CD4-positive, alpha-beta memory T cell (primary cell): ENCODE measurements at regions of chr20 and their contacts with region 1.

Region 1: DNA sequence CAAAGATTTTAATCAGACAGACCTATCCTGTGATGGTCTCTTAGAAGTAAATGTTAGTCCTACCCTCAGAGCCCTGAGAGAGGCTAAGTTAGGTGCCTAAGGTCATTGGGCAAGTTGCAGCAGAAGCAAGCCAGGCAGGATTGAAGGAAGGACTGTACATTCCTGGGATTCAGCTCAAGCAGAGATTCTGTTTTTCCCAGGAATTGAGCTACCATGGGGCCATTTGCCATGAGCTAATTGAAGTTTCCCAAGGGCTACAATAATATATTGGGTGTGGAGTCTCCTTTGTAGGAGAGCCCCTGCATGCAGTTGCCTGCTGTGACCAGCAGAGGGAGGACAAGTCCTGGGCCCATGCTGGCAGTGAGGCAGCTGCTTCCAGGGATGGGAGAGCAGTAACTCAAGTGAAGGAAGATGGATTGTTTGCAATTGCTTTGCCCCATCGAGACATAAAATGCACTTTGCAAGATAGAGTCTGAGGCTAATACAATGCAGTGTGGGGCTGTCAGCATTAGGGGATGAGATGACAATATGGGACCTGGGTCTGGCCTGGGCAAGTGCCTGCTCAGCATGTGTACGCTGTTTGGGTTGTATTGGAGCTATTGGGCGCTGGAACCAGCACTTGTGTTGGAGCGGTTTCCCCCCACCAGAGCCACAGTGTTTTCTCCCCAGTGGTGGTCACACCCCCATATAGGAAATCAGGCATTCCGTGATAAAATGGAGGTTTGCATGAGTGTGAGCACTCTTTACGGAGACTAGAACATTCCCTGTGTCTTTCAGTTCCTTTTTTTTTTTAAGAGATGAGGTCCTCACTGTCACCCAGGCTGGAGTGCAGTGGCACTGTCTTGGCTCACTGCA is 27.9 kb downstream of the DNMT3B start:
- DNase-seq: peak; percentile 66 to 73 (median 67)
- H3K4me3 ChIP-seq: no peak overlapping the region
- H3K4me3 Mint-ChIP-seq: peak overlapping the region in 1 of 8 donors; percentile 9
- H3K27ac ChIP-seq: no peak overlapping the region
- H3K27ac Mint-ChIP-seq: peak overlapping the region in 6 of 7 donors; percentile 16 to 88 (median 70)
- H3K4me1 ChIP-seq: peaks cover 41% of the 10 kb centered on the region
- H3K4me1 Mint-ChIP-seq: peaks cover 23 to 44% (median 31%) of the 10 kb centered on the region in 4 donors
- H3K27me3 ChIP-seq: no peaks in the 10 kb centered on the region
- H3K27me3 Mint-ChIP-seq: no peaks in the 10 kb centered on the region

Region 2: DNA sequence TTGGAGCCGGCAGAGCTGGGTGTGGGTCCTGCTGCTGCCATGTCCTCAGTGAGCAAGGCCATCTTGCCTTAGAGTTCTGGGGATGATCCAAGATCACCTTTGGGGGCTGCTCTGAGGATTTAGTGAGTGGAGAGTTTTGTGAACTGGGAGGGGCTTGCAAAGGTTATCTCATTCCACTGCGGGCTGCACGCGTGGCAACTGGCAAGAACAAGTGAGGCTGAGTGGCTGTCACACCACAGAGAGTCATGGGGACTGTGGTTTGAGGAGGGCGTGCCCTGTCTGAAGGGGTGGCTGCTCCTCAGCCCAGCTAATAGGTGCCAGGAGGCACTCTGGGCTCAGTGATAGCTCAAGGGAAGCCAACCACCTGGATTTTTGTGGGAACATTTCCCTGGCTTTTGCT is 882.1 kb before region 1 on chr20:
- CTCF ChIA-PET with region 1: no interaction called
- POLR2A ChIA-PET with region 1: no interaction called
- intact Hi-C with region 1: no loop called
- DNase-seq: no peak
- H3K4me3 ChIP-seq: no peak overlapping the region
- H3K4me3 Mint-ChIP-seq: no peak overlapping the region
- H3K27ac ChIP-seq: no peak overlapping the region
- H3K27ac Mint-ChIP-seq: no peak overlapping the region
- H3K4me1 ChIP-seq: no peaks in the 10 kb centered on the region
- H3K4me1 Mint-ChIP-seq: no peaks in the 10 kb centered on the region
- H3K27me3 ChIP-seq: no peaks in the 10 kb centered on the region
- H3K27me3 Mint-ChIP-seq: peaks cover 2 to 3% of the 10 kb centered on the region in 2 donors

Region 3: DNA sequence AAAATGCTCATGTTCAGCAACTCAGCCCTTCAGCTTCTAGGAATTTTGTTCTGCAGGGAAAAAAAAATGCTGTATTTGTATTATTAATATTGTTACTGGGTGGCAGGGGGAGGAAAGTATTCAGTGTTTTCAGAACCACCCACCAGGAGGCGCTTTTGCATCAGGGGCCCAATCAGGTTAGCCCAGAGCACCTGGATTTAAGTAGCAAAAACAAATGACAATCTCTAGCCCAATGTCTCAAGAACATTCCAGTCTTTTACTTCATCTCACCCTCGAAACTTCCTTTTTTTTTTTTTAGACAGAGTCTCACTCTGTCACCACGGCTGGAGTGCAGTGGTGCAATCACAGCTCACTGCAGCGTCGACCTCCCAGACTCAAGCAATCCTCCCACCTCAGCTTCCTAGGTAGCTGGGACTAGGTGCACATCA is 115.7 kb before region 1 on chr20:
- CTCF ChIA-PET with region 1: interaction called, 21 read pairs
- POLR2A ChIA-PET with region 1: no interaction called
- intact Hi-C with region 1: no loop called
- DNase-seq: peak; percentile 65 to 67 (median 65)
- H3K4me3 ChIP-seq: no peak overlapping the region
- H3K4me3 Mint-ChIP-seq: no peak overlapping the region
- H3K27ac ChIP-seq: no peak overlapping the region
- H3K27ac Mint-ChIP-seq: peak overlapping the region in 1 of 7 donors; percentile 3
- H3K4me1 ChIP-seq: peaks cover 12% of the 10 kb centered on the region
- H3K4me1 Mint-ChIP-seq: peaks cover 3 to 20% (median 9%) of the 10 kb centered on the region in 4 donors
- H3K27me3 ChIP-seq: no peaks in the 10 kb centered on the region
- H3K27me3 Mint-ChIP-seq: no peaks in the 10 kb centered on the region

Region 4: GRCh38 chr20:32819992-32820710 is 30.0 kb after region 1 on chr20:
- CTCF ChIA-PET with region 1: interaction called, 8 read pairs
- POLR2A ChIA-PET with region 1: interaction called, 16 read pairs
- intact Hi-C with region 1: loop called (anchors 1 kb)
- DNase-seq: peak; percentile 85 to 93 (median 91)
- H3K4me3 ChIP-seq: peak overlapping the region; percentile 83 to 94
- H3K4me3 Mint-ChIP-seq: peak overlapping the region; percentile 96 to 99 (median 98)
- H3K27ac ChIP-seq: peak overlapping the region; percentile 90
- H3K27ac Mint-ChIP-seq: peak overlapping the region; percentile 98 to 100 (median 99)
- H3K4me1 ChIP-seq: peaks cover 49% of the 10 kb centered on the region
- H3K4me1 Mint-ChIP-seq: peaks cover 34 to 48% (median 40%) of the 10 kb centered on the region in 4 donors
- H3K27me3 ChIP-seq: no peaks in the 10 kb centered on the region
- H3K27me3 Mint-ChIP-seq: no peaks in the 10 kb centered on the region

Region 5: GRCh38 chr20:32830437-32830836 is 40.3 kb after region 1 on chr20:
- CTCF ChIA-PET with region 1: interaction called, 12 read pairs
- POLR2A ChIA-PET with region 1: no interaction called
- intact Hi-C with region 1: loop called (anchors 2 kb)
- DNase-seq: no peak
- H3K4me3 ChIP-seq: no peak overlapping the region
- H3K4me3 Mint-ChIP-seq: peak overlapping the region in 1 of 8 donors; percentile 59
- H3K27ac ChIP-seq: no peak overlapping the region
- H3K27ac Mint-ChIP-seq: peak overlapping the region in 3 of 7 donors; percentile 2 to 82 (median 57)
- H3K4me1 ChIP-seq: peaks cover 53% of the 10 kb centered on the region
- H3K4me1 Mint-ChIP-seq: peaks cover 36 to 70% (median 53%) of the 10 kb centered on the region in 4 donors
- H3K27me3 ChIP-seq: no peaks in the 10 kb centered on the region
- H3K27me3 Mint-ChIP-seq: no peaks in the 10 kb centered on the region

Region 6: DNA sequence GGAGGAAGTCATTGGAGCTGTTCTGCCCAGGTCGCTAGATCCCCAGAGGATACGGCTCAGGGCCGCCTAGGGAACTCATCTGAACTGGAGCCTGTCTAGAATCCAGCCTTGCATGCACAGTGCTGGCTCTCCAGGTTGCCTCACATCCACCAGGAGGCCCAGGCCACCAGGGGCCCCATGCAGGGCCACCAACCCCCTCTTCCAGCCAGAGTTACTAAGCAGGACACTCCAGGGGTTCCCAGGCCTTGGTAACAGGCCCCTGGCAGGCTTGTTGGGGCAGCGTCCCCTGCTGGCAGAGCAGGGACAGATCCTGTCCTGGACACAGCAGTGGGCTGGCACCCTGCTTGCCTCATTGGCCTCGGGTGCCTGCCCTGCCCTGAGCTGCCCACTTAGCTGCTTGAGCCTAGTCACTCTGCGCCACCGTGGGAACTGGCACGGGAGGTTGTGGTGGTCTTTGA is 103.9 kb after region 1 on chr20:
- CTCF ChIA-PET with region 1: interaction called, 3 read pairs
- POLR2A ChIA-PET with region 1: no interaction called
- intact Hi-C with region 1: loop called (anchors 1 kb)
- DNase-seq: no peak
- H3K4me3 ChIP-seq: no peak overlapping the region
- H3K4me3 Mint-ChIP-seq: no peak overlapping the region
- H3K27ac ChIP-seq: no peak overlapping the region
- H3K27ac Mint-ChIP-seq: no peak overlapping the region
- H3K4me1 ChIP-seq: no peaks in the 10 kb centered on the region
- H3K4me1 Mint-ChIP-seq: no peaks in the 10 kb centered on the region
- H3K27me3 ChIP-seq: no peaks in the 10 kb centered on the region
- H3K27me3 Mint-ChIP-seq: no peaks in the 10 kb centered on the region

Region 7: GRCh38 chr20:32945710-32946221 is 155.6 kb after region 1 on chr20:
- CTCF ChIA-PET with region 1: interaction called, 25 read pairs
- POLR2A ChIA-PET with region 1: no interaction called
- intact Hi-C with region 1: loop called (anchors 1 kb)
- DNase-seq: peak in 4 of 5 donors; percentile 42 to 54 (median 50)
- H3K4me3 ChIP-seq: peak overlapping the region in 1 of 2 donors; percentile 9
- H3K4me3 Mint-ChIP-seq: peak overlapping the region; percentile 51 to 73 (median 66)
- H3K27ac ChIP-seq: no peak overlapping the region
- H3K27ac Mint-ChIP-seq: peak overlapping the region; percentile 54 to 93 (median 84)
- H3K4me1 ChIP-seq: peaks cover 36% of the 10 kb centered on the region
- H3K4me1 Mint-ChIP-seq: peaks cover 30 to 40% (median 36%) of the 10 kb centered on the region in 4 donors
- H3K27me3 ChIP-seq: no peaks in the 10 kb centered on the region
- H3K27me3 Mint-ChIP-seq: no peaks in the 10 kb centered on the region

Region 8: GRCh38 chr20:33031531-33031930 is 241.4 kb after region 1 on chr20 and contains the start of gene BPIFB6:
- CTCF ChIA-PET with region 1: no interaction called
- POLR2A ChIA-PET with region 1: no interaction called
- intact Hi-C with region 1: no loop called
- DNase-seq: no peak
- H3K4me3 ChIP-seq: no peak within 1 kb of the TSS
- H3K4me3 Mint-ChIP-seq: no peak within 1 kb of the TSS
- H3K27ac ChIP-seq: no peak within 1 kb of the TSS
- H3K27ac Mint-ChIP-seq: no peak within 1 kb of the TSS
- H3K4me1 ChIP-seq: no peaks in the 10 kb centered on the region
- H3K4me1 Mint-ChIP-seq: no peaks in the 10 kb centered on the region
- H3K27me3 ChIP-seq: no peaks in the 10 kb centered on the region
- H3K27me3 Mint-ChIP-seq: no peaks in the 10 kb centered on the region
- total RNA-seq, gene BPIFB6: not detected

Region 9: DNA sequence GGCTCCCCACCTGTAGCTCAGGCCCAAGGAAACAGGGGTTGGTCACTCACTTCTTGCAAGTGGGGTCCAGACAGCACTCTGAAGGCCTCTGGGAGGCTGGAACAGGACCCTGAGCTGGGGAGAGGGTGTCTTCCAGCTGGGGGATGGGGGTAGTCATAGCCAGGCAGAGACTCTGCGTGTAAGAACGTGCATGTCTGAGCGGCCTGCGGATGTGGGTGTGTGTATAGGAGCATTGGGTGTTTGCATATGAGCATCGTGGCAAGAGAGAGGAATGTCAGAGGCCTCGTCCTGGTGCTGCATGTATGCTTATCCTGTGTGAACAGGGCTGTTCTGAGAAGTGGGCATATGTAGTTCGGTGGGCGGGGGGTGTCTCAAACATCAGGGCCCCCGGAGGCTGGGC is 275.7 kb after region 1 on chr20:
- CTCF ChIA-PET with region 1: no interaction called
- POLR2A ChIA-PET with region 1: no interaction called
- intact Hi-C with region 1: no loop called
- DNase-seq: no peak
- H3K4me3 ChIP-seq: no peak overlapping the region
- H3K4me3 Mint-ChIP-seq: no peak overlapping the region
- H3K27ac ChIP-seq: no peak overlapping the region
- H3K27ac Mint-ChIP-seq: no peak overlapping the region
- H3K4me1 ChIP-seq: no peaks in the 10 kb centered on the region
- H3K4me1 Mint-ChIP-seq: peaks cover 6 to 13% (median 10%) of the 10 kb centered on the region in 4 donors
- H3K27me3 ChIP-seq: no peaks in the 10 kb centered on the region
- H3K27me3 Mint-ChIP-seq: no peaks in the 10 kb centered on the region

Region 10: DNA sequence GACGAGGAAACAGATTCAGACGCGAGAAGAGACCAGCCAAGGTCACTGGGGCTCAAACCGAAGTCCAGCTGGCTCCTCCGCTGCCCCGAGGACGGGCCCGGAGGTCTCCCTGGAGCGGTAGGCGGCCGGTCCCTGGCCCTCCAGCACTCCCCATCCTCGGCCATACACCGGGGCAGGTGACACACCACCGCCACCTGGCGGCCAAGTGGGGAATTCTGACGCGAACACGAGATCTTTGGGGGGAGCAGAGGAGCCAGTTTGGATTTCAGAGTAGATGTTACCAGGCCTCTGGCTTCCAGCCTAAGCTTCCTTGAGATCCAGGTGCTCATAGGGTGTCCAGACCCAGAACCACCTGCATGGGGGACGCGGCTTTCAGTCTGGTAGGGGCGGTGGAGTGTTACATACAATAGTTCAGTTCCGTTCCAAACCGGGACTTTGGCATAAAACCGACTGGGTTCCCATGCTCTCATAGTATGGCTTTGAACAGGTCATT is 509.0 kb after region 1 on chr20:
- CTCF ChIA-PET with region 1: interaction called, 9 read pairs
- POLR2A ChIA-PET with region 1: no interaction called
- intact Hi-C with region 1: loop called (anchors 1 kb)
- DNase-seq: peak; percentile 56 to 75 (median 63)
- H3K4me3 ChIP-seq: no peak overlapping the region
- H3K4me3 Mint-ChIP-seq: no peak overlapping the region
- H3K27ac ChIP-seq: no peak overlapping the region
- H3K27ac Mint-ChIP-seq: no peak overlapping the region
- H3K4me1 ChIP-seq: no peaks in the 10 kb centered on the region
- H3K4me1 Mint-ChIP-seq: peaks cover 0 to 2% (median under 1%) of the 10 kb centered on the region in 4 donors
- H3K27me3 ChIP-seq: no peaks in the 10 kb centered on the region
- H3K27me3 Mint-ChIP-seq: no peaks in the 10 kb centered on the region